Upper lobe of right lung (tissue), 1 donor: ENCODE measurements at regions of chr15 and their contacts with region 1.

Region 1: GRCh38 chr15:84929744-84930371 is 45.4 kb downstream of the SLC28A1 start:
- DNase-seq: no peak
- ATAC-seq: peak; percentile 41
- H3K4me3 ChIP-seq: no peak overlapping the region
- H3K27ac ChIP-seq: no peak overlapping the region
- H3K4me1 ChIP-seq: peaks cover 5% of the 10 kb centered on the region
- H3K27me3 ChIP-seq: no peaks in the 10 kb centered on the region
- CTCF ChIP-seq: no peak

Region 2: GRCh38 chr15:84588053-84588874 is 341.6 kb before region 1 on chr15:
- intact Hi-C with region 1: loop called (anchors 5 kb)
- DNase-seq: peak; percentile 93
- ATAC-seq: peak; percentile 100
- H3K4me3 ChIP-seq: peak overlapping the region; percentile 50
- H3K27ac ChIP-seq: no peak overlapping the region
- H3K4me1 ChIP-seq: peaks cover 3% of the 10 kb centered on the region
- H3K27me3 ChIP-seq: no peaks in the 10 kb centered on the region
- CTCF ChIP-seq: peak; percentile 93

Region 3: DNA sequence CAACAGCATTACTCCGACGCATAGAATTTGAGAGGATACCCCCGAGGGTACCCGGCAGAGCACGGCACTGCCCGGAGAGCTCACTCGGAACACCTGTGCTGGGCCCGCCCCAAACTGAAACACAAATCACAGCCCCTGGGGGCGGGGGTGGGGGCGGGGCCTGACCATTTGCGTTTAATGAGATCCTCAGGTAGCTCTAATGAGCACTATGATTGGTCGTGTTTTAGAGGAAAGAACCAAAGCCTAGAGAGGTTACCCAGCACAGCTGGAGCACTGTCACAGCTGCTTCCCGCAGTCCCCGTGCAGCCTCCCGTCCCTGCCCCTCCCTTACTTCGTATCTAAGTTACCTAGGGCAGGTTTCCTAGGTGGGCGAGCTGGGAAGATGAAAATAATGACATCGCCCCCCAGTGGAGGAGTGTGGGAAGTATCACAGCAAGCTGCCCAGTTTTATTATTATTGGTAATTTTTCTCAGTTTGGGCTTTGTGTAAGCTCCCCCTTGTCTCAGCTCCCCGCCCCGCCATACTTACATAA is 238.8 kb after region 1 on chr15:
- intact Hi-C with region 1: no loop called
- DNase-seq: peak; percentile 83
- ATAC-seq: peak; percentile 97
- H3K4me3 ChIP-seq: peak overlapping the region; percentile 32
- H3K27ac ChIP-seq: no peak overlapping the region
- H3K4me1 ChIP-seq: peaks cover 3% of the 10 kb centered on the region
- H3K27me3 ChIP-seq: no peaks in the 10 kb centered on the region
- CTCF ChIP-seq: peak; percentile 41